MCF 10A (cell line): ENCODE measurements at regions of chr5 and their contacts with region 1.

Region 1: DNA sequence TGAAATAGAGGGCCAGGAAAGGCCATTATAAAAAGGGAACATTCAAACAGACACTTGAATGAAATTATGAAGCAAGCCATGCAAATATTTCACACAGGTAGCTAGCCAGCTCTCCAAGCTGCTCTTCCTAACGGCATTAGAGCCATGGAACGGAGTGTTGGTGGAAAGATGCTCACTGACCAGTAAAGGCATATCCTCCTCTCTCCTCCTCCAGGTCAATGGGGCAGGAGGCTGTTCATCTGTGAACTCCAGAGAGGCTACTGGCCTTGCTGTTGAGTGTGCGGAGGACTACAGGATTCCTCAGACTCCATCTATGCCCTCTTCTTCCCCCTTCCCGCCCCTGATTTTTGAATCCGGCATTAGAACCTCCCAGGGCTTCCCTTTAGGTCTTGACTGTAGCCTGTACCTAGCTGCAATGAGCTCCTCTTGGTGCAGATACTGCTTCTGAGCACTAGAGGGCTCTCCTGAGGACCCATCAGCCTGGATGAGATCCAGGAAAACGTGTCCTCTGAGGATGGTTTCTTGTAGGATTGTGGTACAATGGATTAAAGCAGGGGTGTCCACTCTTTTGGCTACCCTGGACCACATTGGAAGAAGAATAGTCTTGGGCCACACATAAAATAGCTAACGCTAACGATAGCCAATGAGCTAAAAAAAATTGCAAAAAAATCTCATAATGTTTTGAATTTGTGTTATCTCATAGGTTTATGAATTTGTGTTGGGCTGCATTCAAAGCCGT is 162.2 kb downstream of the SREK1 start:
- DNase-seq: peak; percentile 79
- H3K4me3 Mint-ChIP-seq: no peak overlapping the region
- H3K27ac Mint-ChIP-seq: no peak overlapping the region
- H3K4me1 Mint-ChIP-seq: no peaks in the 10 kb centered on the region
- H3K27me3 Mint-ChIP-seq: peaks cover 45% of the 10 kb centered on the region
- CTCF ChIP-seq: peak; percentile 87

Region 2: GRCh38 chr5:66291771-66292170 is 14.5 kb before region 1 on chr5:
- CTCF ChIA-PET with region 1: interaction called, 13 read pairs
- POLR2A ChIA-PET with region 1: no interaction called
- intact Hi-C with region 1: no loop called
- DNase-seq: no peak
- H3K4me3 Mint-ChIP-seq: no peak overlapping the region
- H3K27ac Mint-ChIP-seq: no peak overlapping the region
- H3K4me1 Mint-ChIP-seq: no peaks in the 10 kb centered on the region
- H3K27me3 Mint-ChIP-seq: peaks cover 35% of the 10 kb centered on the region
- CTCF ChIP-seq: no peak

Region 3: GRCh38 chr5:66498791-66499207 is 192.5 kb after region 1 on chr5:
- CTCF ChIA-PET with region 1: interaction called, 4 read pairs
- POLR2A ChIA-PET with region 1: no interaction called
- intact Hi-C with region 1: loop called (anchors 2 kb)
- DNase-seq: peak; percentile 41
- H3K4me3 Mint-ChIP-seq: no peak overlapping the region
- H3K27ac Mint-ChIP-seq: peak overlapping the region; percentile 8
- H3K4me1 Mint-ChIP-seq: peaks cover 7% of the 10 kb centered on the region
- H3K27me3 Mint-ChIP-seq: peaks cover 11% of the 10 kb centered on the region
- CTCF ChIP-seq: no peak

Region 4: GRCh38 chr5:66744040-66744439 is 437.8 kb after region 1 on chr5:
- CTCF ChIA-PET with region 1: interaction called, 40 read pairs
- POLR2A ChIA-PET with region 1: no interaction called
- intact Hi-C with region 1: no loop called
- DNase-seq: no peak
- H3K4me3 Mint-ChIP-seq: no peak overlapping the region
- H3K27ac Mint-ChIP-seq: no peak overlapping the region
- H3K4me1 Mint-ChIP-seq: no peaks in the 10 kb centered on the region
- H3K27me3 Mint-ChIP-seq: peaks cover 49% of the 10 kb centered on the region
- CTCF ChIP-seq: no peak

Region 5: DNA sequence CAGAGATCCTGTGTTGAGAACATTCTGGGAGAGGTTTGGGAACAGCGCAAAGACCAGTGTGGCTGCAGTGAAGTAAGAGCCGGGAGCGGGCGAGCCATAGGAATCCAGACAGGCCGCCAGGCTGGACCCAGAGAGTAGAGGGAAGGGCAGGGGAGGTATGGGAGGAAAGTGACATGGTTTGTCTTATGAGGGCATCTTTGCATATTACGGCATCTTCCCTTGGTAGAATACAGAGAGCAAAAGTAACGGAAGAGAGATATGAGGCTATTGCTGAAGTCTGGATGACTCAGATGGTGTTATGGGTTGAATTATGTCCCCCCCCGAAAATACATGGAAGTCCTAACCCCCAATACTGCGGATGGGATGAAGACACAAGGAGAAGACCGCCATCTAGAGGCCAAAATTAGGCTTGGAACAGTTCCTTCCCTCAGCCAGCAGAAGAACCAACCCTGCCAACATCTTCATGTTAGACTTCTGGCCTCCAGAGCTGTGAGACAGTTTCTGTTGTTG is 558.1 kb after region 1 on chr5:
- CTCF ChIA-PET with region 1: interaction called, 3 read pairs
- POLR2A ChIA-PET with region 1: no interaction called
- intact Hi-C with region 1: loop called (anchors 10 kb)
- DNase-seq: peak; percentile 55
- H3K4me3 Mint-ChIP-seq: no peak overlapping the region
- H3K27ac Mint-ChIP-seq: no peak overlapping the region
- H3K4me1 Mint-ChIP-seq: peaks cover 5% of the 10 kb centered on the region
- H3K27me3 Mint-ChIP-seq: no peaks in the 10 kb centered on the region
- CTCF ChIP-seq: peak; percentile 33